Caco-2 (cell line): ENCODE measurements at regions of chr11 and their contacts with region 1.

Region 1: GRCh38 chr11:60265373-60266214 is 14.9 kb upstream of the MS4A4A start:
- DNase-seq: peak in 1 of 2 experiments; percentile 62
- H3K4me3 ChIP-seq: no peak overlapping the region
- H3K4me3 Mint-ChIP-seq: no peak overlapping the region
- H3K27ac Mint-ChIP-seq: no peak overlapping the region
- H3K4me1 ChIP-seq: no peaks in the 10 kb centered on the region
- H3K4me1 Mint-ChIP-seq: no peaks in the 10 kb centered on the region
- H3K27me3 ChIP-seq: no peaks in the 10 kb centered on the region; the same call in 1 of the 2 replicates
- H3K27me3 Mint-ChIP-seq: peaks cover 15% of the 10 kb centered on the region
- CTCF ChIP-seq: peak; percentile 62 to 71

Region 2: DNA sequence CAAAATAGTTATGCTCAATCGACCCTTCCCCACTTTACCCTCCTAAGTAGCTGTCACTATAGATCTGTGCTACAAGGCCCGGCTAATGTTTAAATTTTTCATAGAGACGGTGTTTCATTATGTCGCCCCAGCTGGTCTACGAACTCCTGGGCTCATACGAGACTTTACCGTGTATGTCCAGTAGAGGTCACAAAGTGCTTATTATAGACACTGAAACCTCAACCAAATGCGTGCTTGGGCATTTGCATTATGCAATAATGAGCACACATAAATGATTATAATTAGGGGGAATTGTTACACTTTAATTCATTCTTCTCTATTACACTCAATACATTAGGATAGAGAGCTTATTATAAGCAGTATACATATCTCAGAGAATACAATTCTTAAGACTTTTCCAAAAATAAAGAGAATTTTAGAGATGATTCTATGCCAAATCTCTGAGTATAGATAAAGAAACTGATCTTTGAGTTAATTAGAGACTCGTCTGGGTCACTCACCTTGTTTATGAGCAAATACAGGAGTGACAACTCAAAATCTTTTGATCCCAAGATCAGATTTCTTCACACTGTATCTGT is 442.5 kb before region 1 on chr11:
- CTCF ChIA-PET with region 1: no interaction called
- POLR2A ChIA-PET with region 1: no interaction called
- intact Hi-C with region 1: loop called (anchors 5 kb)
- DNase-seq: peak; percentile 52 to 66
- H3K4me3 ChIP-seq: no peak overlapping the region
- H3K4me3 Mint-ChIP-seq: no peak overlapping the region
- H3K27ac Mint-ChIP-seq: no peak overlapping the region
- H3K4me1 ChIP-seq: no peaks in the 10 kb centered on the region
- H3K4me1 Mint-ChIP-seq: peaks cover 6% of the 10 kb centered on the region
- H3K27me3 ChIP-seq: no peaks in the 10 kb centered on the region
- H3K27me3 Mint-ChIP-seq: no peaks in the 10 kb centered on the region
- CTCF ChIP-seq: peak; percentile 69 to 76

Region 3: GRCh38 chr11:60334005-60334620 is 68.5 kb after region 1 on chr11:
- CTCF ChIA-PET with region 1: interaction called, 5 read pairs
- POLR2A ChIA-PET with region 1: no interaction called
- intact Hi-C with region 1: loop called (anchors 1 kb)
- DNase-seq: peak; percentile 70 to 82
- H3K4me3 ChIP-seq: no peak overlapping the region
- H3K4me3 Mint-ChIP-seq: no peak overlapping the region
- H3K27ac Mint-ChIP-seq: no peak overlapping the region
- H3K4me1 ChIP-seq: no peaks in the 10 kb centered on the region
- H3K4me1 Mint-ChIP-seq: no peaks in the 10 kb centered on the region
- H3K27me3 ChIP-seq: no peaks in the 10 kb centered on the region
- H3K27me3 Mint-ChIP-seq: no peaks in the 10 kb centered on the region
- CTCF ChIP-seq: peak; percentile 81 to 85

Region 4: DNA sequence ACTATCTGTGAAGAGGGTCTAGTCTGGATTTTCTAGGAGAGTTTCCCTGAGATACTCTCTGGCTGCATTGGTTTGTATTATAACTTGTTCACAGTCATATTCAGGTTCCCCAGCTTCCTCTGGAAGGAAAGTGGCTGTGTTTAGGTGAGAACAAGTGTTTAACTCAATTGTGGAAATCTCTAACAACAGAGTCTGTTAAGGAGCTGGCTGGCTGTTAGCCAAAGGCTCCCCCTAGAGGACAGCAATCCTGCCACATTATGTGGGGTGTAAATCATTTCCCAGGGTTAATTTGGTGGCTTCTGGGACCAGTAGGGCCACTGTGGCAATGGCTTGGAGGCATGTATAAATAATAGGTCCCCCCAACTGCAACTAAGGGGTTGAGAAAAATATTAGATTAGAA is 79.9 kb after region 1 on chr11:
- CTCF ChIA-PET with region 1: interaction called, 13 read pairs
- POLR2A ChIA-PET with region 1: no interaction called
- intact Hi-C with region 1: loop called (anchors 1 kb)
- DNase-seq: peak in 1 of 2 experiments; percentile 33
- H3K4me3 ChIP-seq: no peak overlapping the region
- H3K4me3 Mint-ChIP-seq: no peak overlapping the region
- H3K27ac Mint-ChIP-seq: no peak overlapping the region
- H3K4me1 ChIP-seq: no peaks in the 10 kb centered on the region
- H3K4me1 Mint-ChIP-seq: no peaks in the 10 kb centered on the region
- H3K27me3 ChIP-seq: no peaks in the 10 kb centered on the region
- H3K27me3 Mint-ChIP-seq: no peaks in the 10 kb centered on the region
- CTCF ChIP-seq: peak; percentile 28 to 47

Region 5: GRCh38 chr11:60363542-60364510 is 98.2 kb after region 1 on chr11:
- CTCF ChIA-PET with region 1: interaction called, 6 read pairs
- POLR2A ChIA-PET with region 1: no interaction called
- intact Hi-C with region 1: loop called (anchors 1 kb)
- DNase-seq: peak; percentile 55 to 74
- H3K4me3 ChIP-seq: no peak overlapping the region
- H3K4me3 Mint-ChIP-seq: no peak overlapping the region
- H3K27ac Mint-ChIP-seq: no peak overlapping the region
- H3K4me1 ChIP-seq: no peaks in the 10 kb centered on the region; the same call in 1 of the 2 replicates
- H3K4me1 Mint-ChIP-seq: no peaks in the 10 kb centered on the region
- H3K27me3 ChIP-seq: no peaks in the 10 kb centered on the region
- H3K27me3 Mint-ChIP-seq: no peaks in the 10 kb centered on the region
- CTCF ChIP-seq: peak; percentile 70 to 83

Region 6: GRCh38 chr11:60485986-60486385 is 220.4 kb after region 1 on chr11:
- CTCF ChIA-PET with region 1: no interaction called
- POLR2A ChIA-PET with region 1: no interaction called
- intact Hi-C with region 1: loop called (anchors 1 kb)
- DNase-seq: peak; percentile 70 to 72
- H3K4me3 ChIP-seq: no peak overlapping the region
- H3K4me3 Mint-ChIP-seq: no peak overlapping the region
- H3K27ac Mint-ChIP-seq: no peak overlapping the region
- H3K4me1 ChIP-seq: no peaks in the 10 kb centered on the region
- H3K4me1 Mint-ChIP-seq: no peaks in the 10 kb centered on the region
- H3K27me3 ChIP-seq: no peaks in the 10 kb centered on the region
- H3K27me3 Mint-ChIP-seq: peaks cover 3% of the 10 kb centered on the region
- CTCF ChIP-seq: peak; percentile 83 to 93

Region 7: GRCh38 chr11:60615497-60615896 is 349.9 kb after region 1 on chr11:
- CTCF ChIA-PET with region 1: interaction called, 4 read pairs
- POLR2A ChIA-PET with region 1: no interaction called
- intact Hi-C with region 1: loop called (anchors 1 kb)
- DNase-seq: no peak
- H3K4me3 ChIP-seq: no peak overlapping the region
- H3K4me3 Mint-ChIP-seq: no peak overlapping the region
- H3K27ac Mint-ChIP-seq: no peak overlapping the region
- H3K4me1 ChIP-seq: no peaks in the 10 kb centered on the region
- H3K4me1 Mint-ChIP-seq: no peaks in the 10 kb centered on the region
- H3K27me3 ChIP-seq: no peaks in the 10 kb centered on the region
- H3K27me3 Mint-ChIP-seq: peaks cover 11% of the 10 kb centered on the region
- CTCF ChIP-seq: no peak